ENCODE measurements at regions of chr19 and their contacts with region 1.

Region 1: GRCh38 chr19:49497047-49497788 is 984 bp downstream of the RPS11 start:
- DNase-seq: peak; percentile 87
- ATAC-seq: no peak
- H3K4me3 Mint-ChIP-seq: peak overlapping the region; percentile 94
- H3K27ac Mint-ChIP-seq: peak overlapping the region; percentile 97
- H3K4me1 Mint-ChIP-seq: peaks cover 39% of the 10 kb centered on the region
- H3K27me3 Mint-ChIP-seq: no peaks in the 10 kb centered on the region
- CTCF ChIP-seq: no peak

Region 2: GRCh38 chr19:49331616-49332055 is 165.6 kb before region 1 on chr19:
- CTCF ChIA-PET with region 1: no interaction called
- POLR2A ChIA-PET with region 1: no interaction called
- intact Hi-C with region 1: no loop called
- DNase-seq: peak; percentile 80
- ATAC-seq: peak; percentile 75
- H3K4me3 Mint-ChIP-seq: no peak overlapping the region
- H3K27ac Mint-ChIP-seq: peak overlapping the region; percentile 81
- H3K4me1 Mint-ChIP-seq: peaks cover 57% of the 10 kb centered on the region
- H3K27me3 Mint-ChIP-seq: no peaks in the 10 kb centered on the region
- CTCF ChIP-seq: no peak

Region 3: DNA sequence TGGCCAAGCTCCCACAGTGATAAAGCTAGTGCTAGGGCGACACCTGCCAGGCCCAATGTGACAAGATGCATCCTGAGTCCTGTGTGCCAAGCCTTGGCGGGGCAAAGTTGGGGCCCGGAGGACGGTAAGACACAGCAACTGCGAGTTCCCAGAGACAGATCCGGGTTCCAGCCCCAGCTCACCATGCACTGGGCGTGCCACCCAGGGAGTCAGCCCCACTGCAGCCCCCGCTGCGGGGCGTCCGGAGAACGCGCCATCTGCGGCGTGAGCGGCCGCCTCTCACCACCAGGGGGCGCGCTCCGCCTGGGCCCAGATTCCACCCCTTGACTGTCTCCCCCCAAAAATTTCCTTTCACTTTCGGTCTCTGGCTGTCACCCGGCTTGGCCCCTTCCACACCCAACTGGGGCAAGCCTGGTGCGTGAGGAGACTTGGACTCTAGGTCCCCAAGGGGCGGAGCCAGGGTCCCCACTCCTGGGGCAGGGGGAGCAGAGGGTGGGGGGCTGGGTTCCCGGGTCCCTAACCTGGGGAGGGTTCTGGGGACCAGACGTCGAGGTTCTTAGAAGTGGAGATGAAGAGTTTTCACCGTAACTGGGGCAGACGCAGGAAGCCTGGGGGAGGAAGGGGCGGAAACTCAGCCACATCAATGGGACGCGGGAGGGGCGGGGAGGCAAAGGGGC is 23.2 kb before region 1 on chr19 and contains the start of gene FLT3LG:
- CTCF ChIA-PET with region 1: interaction called, 7 read pairs
- POLR2A ChIA-PET with region 1: interaction called, 16 read pairs
- intact Hi-C with region 1: no loop called
- DNase-seq: peak; percentile 93
- ATAC-seq: peak; percentile 60
- H3K4me3 Mint-ChIP-seq: peak within 1 kb of the TSS; percentile 89
- H3K27ac Mint-ChIP-seq: peak within 1 kb of the TSS; percentile 92
- H3K4me1 Mint-ChIP-seq: peaks cover 45% of the 10 kb centered on the region
- H3K27me3 Mint-ChIP-seq: no peaks in the 10 kb centered on the region
- CTCF ChIP-seq: peak; percentile 94
- total RNA-seq, gene FLT3LG: 57.7 to 61.2 TPM

Region 4: DNA sequence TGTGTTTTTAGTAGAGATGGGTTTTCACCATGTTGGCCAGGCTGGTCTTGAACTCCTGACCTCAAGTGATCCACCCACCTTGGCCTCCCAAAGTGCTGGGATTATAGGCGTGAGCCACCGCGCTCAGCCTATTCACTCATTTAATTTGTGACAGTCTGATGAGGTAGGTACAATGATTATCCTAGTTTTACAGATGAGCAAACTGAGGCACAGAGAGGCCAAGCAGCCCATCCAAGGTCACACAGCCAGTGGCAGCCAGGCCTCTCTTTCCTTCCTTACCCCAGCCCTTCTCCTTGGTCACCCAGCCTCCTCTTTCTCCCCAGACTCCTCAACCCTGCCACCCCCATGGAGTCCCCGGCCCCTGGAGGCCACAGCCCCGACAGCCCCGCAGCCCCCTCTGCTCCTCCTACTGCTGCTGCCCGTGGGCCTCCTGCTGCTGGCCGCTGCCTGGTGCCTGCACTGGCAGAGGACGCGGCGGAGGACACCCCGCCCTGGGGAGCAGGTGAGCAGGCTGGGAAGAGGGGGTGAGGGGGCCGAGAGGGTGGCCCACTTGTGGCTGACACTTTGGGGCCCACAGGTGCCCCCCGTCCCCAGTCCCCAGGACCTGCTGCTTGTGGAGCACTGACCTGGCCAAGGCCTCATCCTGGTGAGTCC is 17.1 kb before region 1 on chr19:
- CTCF ChIA-PET with region 1: interaction called, 7 read pairs
- POLR2A ChIA-PET with region 1: interaction called, 16 read pairs
- intact Hi-C with region 1: no loop called
- DNase-seq: no peak
- ATAC-seq: no peak
- H3K4me3 Mint-ChIP-seq: no peak overlapping the region
- H3K27ac Mint-ChIP-seq: no peak overlapping the region
- H3K4me1 Mint-ChIP-seq: peaks cover 19% of the 10 kb centered on the region
- H3K27me3 Mint-ChIP-seq: no peaks in the 10 kb centered on the region
- CTCF ChIP-seq: no peak

Region 5: DNA sequence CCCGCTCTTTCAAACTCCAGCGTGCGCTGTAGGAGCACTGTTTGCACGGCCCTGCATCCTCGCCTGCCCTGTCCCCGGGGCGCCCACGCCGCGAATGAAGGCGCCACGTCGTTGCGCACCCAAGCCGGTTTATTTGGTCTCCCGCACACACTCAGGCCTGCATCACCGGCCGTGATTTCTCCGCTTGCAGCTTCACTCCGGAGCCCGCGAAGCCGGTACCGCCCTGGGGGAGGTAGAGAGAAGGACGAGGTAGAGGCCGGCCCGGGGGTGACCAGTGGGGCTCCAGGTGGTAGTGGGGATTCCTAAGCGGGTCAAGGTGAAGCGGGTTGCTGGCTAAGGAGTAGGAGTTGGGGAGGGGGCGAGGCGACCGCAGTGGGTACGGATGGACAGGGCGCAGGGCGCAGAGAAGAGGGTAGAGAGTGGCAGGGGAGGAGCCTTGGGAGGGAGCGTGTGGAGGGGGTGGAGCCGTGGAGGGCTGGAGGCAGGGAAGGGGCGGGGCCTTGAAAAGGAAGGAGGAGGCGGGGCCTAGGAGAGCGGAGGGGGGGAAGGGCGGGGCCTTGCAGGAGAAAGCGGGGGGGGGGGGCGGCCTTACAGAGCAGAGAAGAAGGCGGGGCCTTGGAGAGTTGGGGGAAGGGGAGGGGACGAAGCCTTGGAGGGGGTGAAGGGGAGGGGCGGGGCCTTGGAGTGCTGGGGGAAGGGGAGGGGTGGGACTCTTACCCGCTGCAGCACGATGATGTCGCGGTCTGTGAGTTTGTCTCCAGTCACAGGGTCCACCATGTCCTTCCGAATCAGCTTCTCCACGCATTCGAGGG is 58.6 kb after region 1 on chr19:
- CTCF ChIA-PET with region 1: interaction called, 232 read pairs
- POLR2A ChIA-PET with region 1: interaction called, 21 read pairs
- intact Hi-C with region 1: no loop called
- DNase-seq: peak; percentile 94
- ATAC-seq: peak; percentile 65
- H3K4me3 Mint-ChIP-seq: peak overlapping the region; percentile 63
- H3K27ac Mint-ChIP-seq: peak overlapping the region; percentile 94
- H3K4me1 Mint-ChIP-seq: peaks cover 76% of the 10 kb centered on the region
- H3K27me3 Mint-ChIP-seq: no peaks in the 10 kb centered on the region
- CTCF ChIP-seq: no peak

Region 6: GRCh38 chr19:49580264-49581006 is 83.2 kb after region 1 on chr19 and contains the start of gene NOSIP:
- CTCF ChIA-PET with region 1: interaction called, 185 read pairs
- POLR2A ChIA-PET with region 1: interaction called, 14 read pairs
- intact Hi-C with region 1: no loop called
- DNase-seq: peak; percentile 97
- ATAC-seq: peak; percentile 98
- H3K4me3 Mint-ChIP-seq: peak within 1 kb of the TSS; percentile 95
- H3K27ac Mint-ChIP-seq: peak within 1 kb of the TSS; percentile 90
- H3K4me1 Mint-ChIP-seq: peaks cover 32% of the 10 kb centered on the region
- H3K27me3 Mint-ChIP-seq: no peaks in the 10 kb centered on the region
- CTCF ChIP-seq: no peak
- total RNA-seq, gene NOSIP: 75.6 to 79.4 TPM

Region 7: GRCh38 chr19:49590071-49590970 is 93.1 kb after region 1 on chr19:
- CTCF ChIA-PET with region 1: no interaction called
- POLR2A ChIA-PET with region 1: interaction called, 10 read pairs
- intact Hi-C with region 1: no loop called
- DNase-seq: peak; percentile 99
- ATAC-seq: peak; percentile 77
- H3K4me3 Mint-ChIP-seq: peak overlapping the region; percentile 77
- H3K27ac Mint-ChIP-seq: peak overlapping the region; percentile 92
- H3K4me1 Mint-ChIP-seq: peaks cover 23% of the 10 kb centered on the region
- H3K27me3 Mint-ChIP-seq: no peaks in the 10 kb centered on the region
- CTCF ChIP-seq: peak; percentile 25